ENCODE measurements at regions of chr6 and their contacts with region 1.

Region 1: DNA sequence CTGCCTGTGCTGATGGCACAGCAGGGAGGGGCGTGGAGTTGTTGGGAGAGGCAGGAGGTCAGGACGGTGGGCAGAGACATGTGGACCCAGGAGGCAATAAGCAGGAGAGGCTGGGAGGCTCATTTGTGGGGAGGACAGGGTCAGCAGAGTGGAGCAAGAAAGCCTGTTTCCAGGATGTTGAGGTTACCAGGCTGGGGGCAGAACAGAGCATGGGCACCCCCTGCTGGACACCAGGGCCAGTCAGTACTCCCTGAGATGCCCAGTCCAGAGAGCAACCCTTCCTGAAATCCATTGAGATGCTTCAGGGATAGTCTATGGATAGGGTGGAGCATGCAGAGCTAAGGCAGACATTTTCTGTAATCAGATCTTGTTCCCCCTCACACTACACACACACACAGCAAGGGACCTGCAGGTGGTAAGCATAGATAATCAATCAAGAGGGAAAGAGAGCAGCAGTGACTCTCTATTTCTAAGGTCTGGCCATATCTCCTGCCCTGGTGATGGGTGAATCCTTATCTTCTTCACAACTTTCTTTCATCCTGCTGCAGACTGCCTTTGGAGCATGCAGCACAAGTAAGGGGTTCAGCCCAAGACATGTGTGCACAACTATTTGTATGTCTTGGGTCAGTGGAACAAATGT is 41.7 kb downstream of the MOCS1 start:
- DNase-seq: peak; percentile 61
- H3K4me3 ChIP-seq: no peak overlapping the region
- H3K27ac ChIP-seq: no peak overlapping the region
- H3K4me1 ChIP-seq: peaks cover 21% of the 10 kb centered on the region
- H3K27me3 ChIP-seq: no peaks in the 10 kb centered on the region
- CTCF ChIP-seq: peak; percentile 81

Region 2: DNA sequence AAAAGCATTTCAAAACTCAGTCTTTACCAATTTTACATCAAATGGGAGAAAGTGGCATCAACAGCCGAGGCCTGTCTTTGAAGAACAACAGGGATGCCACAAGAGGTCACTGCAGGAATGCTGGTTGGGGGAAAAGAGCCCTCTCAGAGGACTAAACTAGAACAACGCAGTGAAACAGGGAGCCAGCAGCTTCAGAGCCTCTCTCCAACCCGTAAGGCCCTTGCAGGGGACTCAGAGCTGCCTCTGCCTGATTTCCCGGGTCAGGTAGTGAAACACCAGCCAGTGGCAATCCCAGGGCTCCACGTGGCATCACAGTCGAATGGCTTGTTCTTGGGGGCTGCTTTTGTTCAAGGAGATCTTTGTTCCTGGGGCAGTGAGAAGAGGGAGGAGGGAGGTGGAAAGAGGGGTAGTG is 515.1 kb before region 1 on chr6:
- intact Hi-C with region 1: loop called (anchors 10 kb)
- DNase-seq: peak; percentile 28
- H3K4me3 ChIP-seq: no peak overlapping the region
- H3K27ac ChIP-seq: no peak overlapping the region
- H3K4me1 ChIP-seq: peaks cover 11% of the 10 kb centered on the region
- H3K27me3 ChIP-seq: peaks cover 4% of the 10 kb centered on the region
- CTCF ChIP-seq: peak; percentile 76

Region 3: DNA sequence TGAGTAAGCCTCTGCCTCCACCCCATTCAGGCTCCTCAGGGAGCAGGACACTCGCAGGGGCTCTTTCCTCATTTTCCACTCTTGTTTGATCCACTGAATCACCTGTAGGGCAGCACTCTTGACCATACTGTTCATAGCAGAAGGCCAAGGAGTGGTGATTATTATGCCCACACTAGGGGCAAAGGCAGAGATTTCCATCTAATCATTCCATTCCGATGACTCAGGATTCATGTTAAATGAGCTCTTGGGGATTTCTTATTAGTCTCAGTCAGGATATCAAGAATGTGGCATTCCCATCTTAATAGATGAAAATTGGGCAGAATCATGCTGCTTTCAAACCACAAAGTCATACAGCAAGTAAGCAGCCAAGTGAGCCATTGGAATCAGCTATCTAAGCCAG is 143.6 kb after region 1 on chr6:
- intact Hi-C with region 1: no loop called
- DNase-seq: no peak
- H3K4me3 ChIP-seq: no peak overlapping the region
- H3K27ac ChIP-seq: no peak overlapping the region
- H3K4me1 ChIP-seq: no peaks in the 10 kb centered on the region
- H3K27me3 ChIP-seq: peaks cover 50% of the 10 kb centered on the region
- CTCF ChIP-seq: no peak